ENCODE measurements at regions of chr12 and their contacts with region 1.

Region 1: DNA sequence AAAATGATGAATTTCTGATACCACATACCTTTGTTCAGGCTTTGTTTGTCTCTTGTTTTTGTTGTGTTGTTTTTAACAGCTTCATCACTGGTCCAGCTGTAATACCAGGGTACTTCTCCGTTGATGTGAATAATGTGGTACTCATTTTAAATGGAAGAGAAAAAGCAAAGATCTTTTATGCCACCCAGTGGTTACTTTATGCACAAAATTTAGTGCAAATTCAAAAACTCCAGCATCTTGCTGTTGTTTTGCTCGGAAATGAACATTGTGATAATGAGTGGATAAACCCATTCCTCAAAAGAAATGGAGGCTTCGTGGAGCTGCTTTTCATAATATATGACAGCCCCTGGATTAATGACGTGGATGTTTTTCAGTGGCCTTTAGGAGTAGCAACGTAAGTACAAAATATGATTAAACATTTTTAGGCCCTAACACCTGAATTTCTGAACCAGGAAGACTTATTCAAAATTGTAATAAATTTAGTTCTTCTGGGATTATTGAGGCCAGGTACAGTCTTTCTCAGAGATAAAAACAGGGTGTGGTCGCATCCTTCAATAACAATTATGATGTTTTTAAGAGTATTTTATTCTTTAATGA is 22.4 kb downstream of the RXYLT1 start:
- DNase-seq: peak in 2 of 5 donors; percentile 22 to 23
- H3K4me3 ChIP-seq: no peak overlapping the region
- H3K4me3 Mint-ChIP-seq: no peak overlapping the region
- H3K27ac ChIP-seq: no peak overlapping the region
- H3K27ac Mint-ChIP-seq: no peak overlapping the region
- H3K4me1 ChIP-seq: no peaks in the 10 kb centered on the region
- H3K4me1 Mint-ChIP-seq: peaks cover 0 to 2% (median 0%) of the 10 kb centered on the region in 4 donors
- H3K27me3 ChIP-seq: no peaks in the 10 kb centered on the region
- H3K27me3 Mint-ChIP-seq: no peaks in the 10 kb centered on the region

Region 2: GRCh38 chr12:63420206-63420644 is 381.9 kb before region 1 on chr12:
- CTCF ChIA-PET with region 1: interaction called, 16 read pairs
- POLR2A ChIA-PET with region 1: no interaction called
- intact Hi-C with region 1: no loop called
- DNase-seq: peak in 4 of 5 donors; percentile 1 to 24 (median 4)
- H3K4me3 ChIP-seq: no peak overlapping the region
- H3K4me3 Mint-ChIP-seq: no peak overlapping the region
- H3K27ac ChIP-seq: no peak overlapping the region
- H3K27ac Mint-ChIP-seq: no peak overlapping the region
- H3K4me1 ChIP-seq: no peaks in the 10 kb centered on the region
- H3K4me1 Mint-ChIP-seq: no peaks in the 10 kb centered on the region
- H3K27me3 ChIP-seq: no peaks in the 10 kb centered on the region
- H3K27me3 Mint-ChIP-seq: peaks cover 1 to 2% of the 10 kb centered on the region in 2 donors

Region 3: DNA sequence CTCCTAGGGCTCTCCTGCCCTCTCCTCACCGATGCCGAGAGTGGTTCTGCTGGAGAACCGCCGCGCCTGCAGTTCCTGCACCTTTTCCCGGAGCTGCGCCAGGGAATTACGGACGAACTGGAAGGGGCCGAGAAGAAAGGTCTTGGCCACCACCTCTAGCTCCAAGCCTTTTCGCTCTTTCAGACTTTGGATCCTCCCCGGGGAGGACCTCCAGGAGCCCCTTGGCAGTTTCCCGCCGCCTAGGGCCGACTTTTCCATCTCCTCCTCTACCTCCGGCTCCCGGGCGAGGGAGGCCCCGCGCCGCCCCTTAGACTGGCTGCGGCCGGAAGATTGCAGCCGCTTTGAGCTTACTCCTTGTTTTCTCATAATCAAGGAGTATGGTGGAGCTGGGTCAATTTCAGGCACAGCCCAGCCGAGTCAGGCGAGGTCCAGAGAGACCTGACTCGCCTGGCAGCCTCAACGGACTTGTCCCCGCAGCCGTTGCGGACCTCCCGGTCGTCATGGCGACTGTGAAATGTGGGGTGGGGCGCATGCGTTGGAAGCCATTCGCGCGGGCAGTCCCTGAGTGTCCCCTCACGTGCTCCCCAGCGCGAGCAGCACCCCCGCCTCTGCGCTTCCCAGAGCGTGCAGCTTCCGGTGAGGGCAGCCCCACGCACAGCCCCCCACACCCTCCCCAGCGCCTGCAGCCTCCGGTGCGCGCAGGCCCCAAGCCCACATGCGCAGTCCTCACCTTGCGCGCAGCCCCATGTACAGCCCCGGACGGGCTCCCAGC is 133.9 kb before region 1 on chr12 and contains the start of gene DPY19L2:
- CTCF ChIA-PET with region 1: interaction called, 9 read pairs
- POLR2A ChIA-PET with region 1: no interaction called
- intact Hi-C with region 1: loop called (anchors 1 kb)
- DNase-seq: peak in 2 of 5 donors; percentile 16
- H3K4me3 ChIP-seq: no peak within 1 kb of the TSS
- H3K4me3 Mint-ChIP-seq: peak within 1 kb of the TSS; percentile 67 to 81 (median 76)
- H3K27ac ChIP-seq: no peak within 1 kb of the TSS
- H3K27ac Mint-ChIP-seq: no peak within 1 kb of the TSS
- H3K4me1 ChIP-seq: peaks cover 5% of the 10 kb centered on the region
- H3K4me1 Mint-ChIP-seq: peaks cover 8 to 22% (median 12%) of the 10 kb centered on the region in 4 donors
- H3K27me3 ChIP-seq: no peaks in the 10 kb centered on the region
- H3K27me3 Mint-ChIP-seq: peaks cover 16 to 17% of the 10 kb centered on the region in 2 donors
- total RNA-seq, gene DPY19L2: 0.93 to 0.97 TPM

Region 4: GRCh38 chr12:63814146-63814772 is 12.1 kb after region 1 on chr12:
- CTCF ChIA-PET with region 1: interaction called, 10 read pairs
- POLR2A ChIA-PET with region 1: interaction called, 3 read pairs
- intact Hi-C with region 1: no loop called
- DNase-seq: no peak
- H3K4me3 ChIP-seq: no peak overlapping the region
- H3K4me3 Mint-ChIP-seq: peak overlapping the region; percentile 15 to 76 (median 58)
- H3K27ac ChIP-seq: peak overlapping the region; percentile 43
- H3K27ac Mint-ChIP-seq: peak overlapping the region; percentile 42 to 92 (median 84)
- H3K4me1 ChIP-seq: peaks cover 21% of the 10 kb centered on the region
- H3K4me1 Mint-ChIP-seq: peaks cover 6 to 12% (median 10%) of the 10 kb centered on the region in 4 donors
- H3K27me3 ChIP-seq: no peaks in the 10 kb centered on the region
- H3K27me3 Mint-ChIP-seq: peaks cover 0 to 9% of the 10 kb centered on the region in 2 donors